ENCODE measurements at regions of chr9 and their contacts with region 1.

Region 1: DNA sequence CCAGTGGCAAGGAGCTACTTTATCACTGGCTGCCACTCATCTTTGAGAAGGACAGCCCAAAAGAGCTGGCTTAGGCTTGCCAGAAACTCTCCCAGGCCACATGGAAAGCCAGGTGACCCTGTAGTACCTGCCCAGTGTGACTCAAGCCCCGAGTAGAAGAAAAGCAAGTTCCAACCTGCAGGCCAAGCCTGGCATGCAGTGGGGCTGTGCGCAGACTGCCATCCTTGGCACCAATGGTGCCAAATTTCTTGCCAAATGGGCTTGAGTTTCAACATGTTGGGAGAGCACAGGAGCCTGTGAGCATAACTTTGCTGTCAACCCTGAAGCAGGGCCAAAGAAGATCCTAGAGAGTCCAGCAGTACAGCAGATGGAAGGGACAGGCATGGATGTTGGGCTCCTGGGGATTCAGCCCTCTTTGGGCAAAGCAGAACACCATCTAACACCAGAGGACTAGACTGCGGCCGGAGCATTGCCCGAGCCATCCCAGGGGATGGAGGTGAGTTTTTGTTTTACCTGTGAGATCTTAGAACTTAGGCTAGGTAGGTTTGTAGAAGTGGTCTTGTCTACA is 27.3 kb upstream of the SHB start:
- DNase-seq: peak; percentile 97
- H3K4me3 Mint-ChIP-seq: no peak overlapping the region
- H3K27ac Mint-ChIP-seq: no peak overlapping the region
- H3K4me1 Mint-ChIP-seq: peaks cover 18% of the 10 kb centered on the region
- H3K27me3 Mint-ChIP-seq: no peaks in the 10 kb centered on the region
- CTCF ChIP-seq: no peak

Region 2: GRCh38 chr9:38035873-38036272 is 60.4 kb before region 1 on chr9:
- CTCF ChIA-PET with region 1: no interaction called
- POLR2A ChIA-PET with region 1: no interaction called
- intact Hi-C with region 1: no loop called
- DNase-seq: peak; percentile 72
- H3K4me3 Mint-ChIP-seq: no peak overlapping the region
- H3K27ac Mint-ChIP-seq: peak overlapping the region; percentile 86
- H3K4me1 Mint-ChIP-seq: peaks cover 29% of the 10 kb centered on the region
- H3K27me3 Mint-ChIP-seq: no peaks in the 10 kb centered on the region
- CTCF ChIP-seq: no peak

Region 3: DNA sequence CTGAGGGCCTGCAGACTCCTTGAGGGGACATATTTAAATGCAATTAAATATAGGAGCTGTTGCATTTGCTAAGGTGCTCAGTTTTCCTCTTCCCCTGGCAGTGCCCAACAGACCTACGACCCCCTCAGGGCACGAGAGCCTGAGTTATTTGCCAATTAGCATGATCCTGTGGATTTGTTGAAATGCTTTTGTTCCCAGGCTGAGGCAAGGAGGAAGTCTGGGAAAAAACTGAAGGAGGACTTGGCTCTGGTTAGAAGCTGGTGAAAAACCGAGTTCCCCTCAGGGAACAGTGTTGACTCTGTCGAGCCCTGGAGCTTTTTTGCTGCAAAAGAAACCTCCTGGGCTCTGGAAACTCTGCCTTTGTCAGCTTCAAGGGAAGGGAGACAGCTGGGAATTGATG is 76.3 kb after region 1 on chr9:
- CTCF ChIA-PET with region 1: no interaction called
- POLR2A ChIA-PET with region 1: interaction called, 3 read pairs
- intact Hi-C with region 1: loop called (anchors 5 kb)
- DNase-seq: no peak
- H3K4me3 Mint-ChIP-seq: no peak overlapping the region
- H3K27ac Mint-ChIP-seq: no peak overlapping the region
- H3K4me1 Mint-ChIP-seq: peaks cover 13% of the 10 kb centered on the region
- H3K27me3 Mint-ChIP-seq: no peaks in the 10 kb centered on the region
- CTCF ChIP-seq: no peak

Region 4: GRCh38 chr9:38408719-38409118 is 312.4 kb after region 1 on chr9:
- CTCF ChIA-PET with region 1: no interaction called
- POLR2A ChIA-PET with region 1: no interaction called
- intact Hi-C with region 1: no loop called
- DNase-seq: no peak
- H3K4me3 Mint-ChIP-seq: no peak overlapping the region
- H3K27ac Mint-ChIP-seq: no peak overlapping the region
- H3K4me1 Mint-ChIP-seq: no peaks in the 10 kb centered on the region
- H3K27me3 Mint-ChIP-seq: peaks cover 58% of the 10 kb centered on the region
- CTCF ChIP-seq: no peak

Measured in MCF 10A (cell line).